ENCODE measurements at regions of chr9 and their contacts with region 1.

Region 1: GRCh38 chr9:34646211-34647083 is at the start of gene GALT:
- DNase-seq: peak; percentile 82 to 98 (median 93)
- ATAC-seq: peak; percentile 96
- H3K4me3 ChIP-seq: peak within 1 kb of the TSS; percentile 90
- H3K4me3 Mint-ChIP-seq: peak within 1 kb of the TSS; percentile 82 to 96 (median 92)
- H3K27ac ChIP-seq: peak within 1 kb of the TSS; percentile 87
- H3K27ac Mint-ChIP-seq: peak within 1 kb of the TSS; percentile 86 to 94 (median 90)
- H3K4me1 ChIP-seq: peaks cover 20 to 23% of the 10 kb centered on the region in 2 donors
- H3K4me1 Mint-ChIP-seq: peaks cover 18 to 48% (median 34%) of the 10 kb centered on the region in 7 donors
- H3K27me3 ChIP-seq: no peaks in the 10 kb centered on the region
- H3K27me3 Mint-ChIP-seq: no peaks in the 10 kb centered on the region
- total RNA-seq, gene GALT: 126 to 217 (median 162) TPM

Region 2: DNA sequence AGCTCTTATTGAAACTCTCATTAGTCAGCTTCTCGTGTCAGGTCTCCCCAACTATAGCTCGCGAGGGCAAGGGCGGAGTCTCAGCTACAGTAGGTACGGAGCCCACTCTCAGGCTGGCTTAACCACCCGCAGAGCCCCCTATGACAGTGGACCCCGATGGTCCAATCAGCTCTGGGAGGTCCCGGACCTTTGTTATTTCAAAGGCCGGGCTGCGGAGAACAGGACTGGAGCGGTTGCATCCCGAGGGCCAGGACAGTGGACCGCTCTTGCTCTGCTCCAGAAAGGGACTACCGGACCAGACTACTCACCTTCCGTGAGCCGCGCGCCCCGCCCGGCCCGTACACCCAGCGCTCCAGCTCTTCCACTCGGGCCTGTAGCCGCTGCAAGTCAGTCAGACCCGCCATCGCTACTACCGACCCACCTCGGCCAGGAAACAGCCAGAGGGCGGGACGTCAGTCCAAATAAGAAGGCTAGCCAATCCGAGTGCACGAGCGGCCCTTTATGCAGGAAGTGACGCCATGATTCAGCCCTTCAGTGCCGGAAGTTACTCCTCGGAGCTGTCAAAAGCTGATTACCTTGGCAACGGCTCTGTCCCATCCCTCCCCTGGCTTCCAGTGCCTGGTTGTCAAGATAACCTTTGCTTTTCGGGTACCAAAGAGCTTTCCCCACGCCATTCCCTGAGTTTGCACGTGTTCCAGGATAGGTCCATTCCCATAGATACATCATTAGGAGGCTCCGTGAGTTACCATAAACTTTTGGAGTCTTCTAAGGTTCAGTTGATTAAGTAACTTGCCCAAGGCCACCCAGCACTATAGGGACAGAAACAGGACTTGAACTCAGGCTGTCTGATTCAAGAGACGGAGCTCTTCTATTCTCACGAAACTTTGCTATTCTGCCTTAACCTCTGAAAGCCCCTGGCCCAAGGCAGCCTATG is 26.1 kb before region 1 on chr9 and contains the start of gene DCTN3:
- CTCF ChIA-PET with region 1: interaction called, 8 read pairs
- POLR2A ChIA-PET with region 1: interaction called, 10 read pairs
- intact Hi-C with region 1: loop called in 1 of 2 experiments (anchors 1 kb)
- DNase-seq: peak; percentile 61 to 94 (median 91)
- ATAC-seq: peak; percentile 98
- H3K4me3 ChIP-seq: peak within 1 kb of the TSS; percentile 86
- H3K4me3 Mint-ChIP-seq: peak within 1 kb of the TSS; percentile 88 to 98 (median 94)
- H3K27ac ChIP-seq: peak within 1 kb of the TSS; percentile 74
- H3K27ac Mint-ChIP-seq: peak within 1 kb of the TSS; percentile 65 to 97 (median 88)
- H3K4me1 ChIP-seq: peaks cover 12 to 30% of the 10 kb centered on the region in 2 donors
- H3K4me1 Mint-ChIP-seq: peaks cover 23 to 39% (median 32%) of the 10 kb centered on the region in 7 donors
- H3K27me3 ChIP-seq: peaks cover 3 to 31% of the 10 kb centered on the region in 2 donors
- H3K27me3 Mint-ChIP-seq: peaks cover 18 to 41% (median 27%) of the 10 kb centered on the region in 5 donors
- total RNA-seq, gene DCTN3: 55.6 to 110 (median 73.0) TPM

Region 3: DNA sequence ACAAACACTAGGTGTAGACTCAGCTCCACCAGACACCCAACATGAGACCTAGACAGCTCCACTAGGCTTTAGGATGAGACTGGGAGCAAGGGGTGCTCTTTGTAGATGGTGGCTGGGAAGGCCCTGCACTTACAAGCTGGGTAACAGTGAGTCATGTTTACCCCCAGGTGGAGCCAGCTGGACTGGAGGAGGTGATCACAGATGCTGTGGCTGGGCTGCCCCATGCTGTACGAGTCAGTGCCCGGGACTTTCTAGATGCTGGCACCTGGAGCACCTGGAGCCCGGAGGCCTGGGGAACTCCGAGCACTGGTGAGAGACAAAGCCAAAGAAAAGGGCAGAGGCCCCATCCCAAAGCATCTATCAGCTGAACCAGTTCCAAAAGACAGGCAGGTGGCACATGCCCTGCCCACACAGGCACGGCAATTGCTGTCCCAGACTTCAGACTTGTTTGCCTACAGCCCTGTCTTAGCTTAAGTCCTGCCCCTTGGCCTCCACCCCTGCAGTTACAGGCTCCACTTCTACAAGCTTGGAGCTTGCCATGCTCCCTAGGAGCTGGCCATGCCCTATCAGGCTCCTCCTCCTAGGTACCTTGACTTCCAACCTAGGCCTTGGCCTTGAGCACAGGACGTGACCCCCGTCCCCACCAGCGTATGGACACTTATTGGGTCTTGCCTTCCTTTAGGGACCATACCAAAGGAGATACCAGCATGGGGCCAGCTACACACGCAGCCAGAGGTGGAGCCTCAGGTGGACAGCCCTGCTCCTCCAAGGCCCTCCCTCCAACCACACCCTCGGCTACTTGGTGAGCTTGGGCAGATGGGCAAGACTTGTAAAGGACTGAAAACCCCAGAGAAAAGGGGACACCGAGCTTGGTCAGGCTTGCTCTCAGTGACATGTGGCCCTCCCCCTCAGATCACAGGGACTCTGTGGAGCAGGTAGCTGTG is 13.4 kb after region 1 on chr9:
- CTCF ChIA-PET with region 1: interaction called, 50 read pairs
- POLR2A ChIA-PET with region 1: interaction called, 79 read pairs
- intact Hi-C with region 1: loop called (anchors 1 kb)
- DNase-seq: no peak
- ATAC-seq: no peak
- H3K4me3 ChIP-seq: no peak overlapping the region
- H3K4me3 Mint-ChIP-seq: no peak overlapping the region
- H3K27ac ChIP-seq: no peak overlapping the region
- H3K27ac Mint-ChIP-seq: peak overlapping the region in 2 of 9 donors; percentile 21 to 32
- H3K4me1 ChIP-seq: peaks cover 28 to 32% of the 10 kb centered on the region in 2 donors
- H3K4me1 Mint-ChIP-seq: peaks cover 28 to 48% (median 40%) of the 10 kb centered on the region in 7 donors
- H3K27me3 ChIP-seq: no peaks in the 10 kb centered on the region
- H3K27me3 Mint-ChIP-seq: no peaks in the 10 kb centered on the region

Region 4: GRCh38 chr9:34701769-34702736 is 55.6 kb after region 1 on chr9:
- CTCF ChIA-PET with region 1: interaction called, 11 read pairs
- POLR2A ChIA-PET with region 1: interaction called, 4 read pairs
- intact Hi-C with region 1: loop called (anchors 1 kb)
- DNase-seq: peak; percentile 59 to 83 (median 73)
- ATAC-seq: peak; percentile 90
- H3K4me3 ChIP-seq: peak overlapping the region; percentile 61
- H3K4me3 Mint-ChIP-seq: peak overlapping the region; percentile 80 to 91 (median 84)
- H3K27ac ChIP-seq: no peak overlapping the region
- H3K27ac Mint-ChIP-seq: peak overlapping the region in 7 of 9 donors; percentile 1 to 84 (median 20)
- H3K4me1 ChIP-seq: no peaks in the 10 kb centered on the region
- H3K4me1 Mint-ChIP-seq: peaks cover 5 to 9% (median 6%) of the 10 kb centered on the region in 7 donors
- H3K27me3 ChIP-seq: no peaks in the 10 kb centered on the region
- H3K27me3 Mint-ChIP-seq: peaks cover 0 to 17% (median 0%) of the 10 kb centered on the region in 5 donors

Region 5: GRCh38 chr9:34793428-34793827 is 147.0 kb after region 1 on chr9:
- CTCF ChIA-PET with region 1: no interaction called
- POLR2A ChIA-PET with region 1: no interaction called
- intact Hi-C with region 1: no loop called
- DNase-seq: no peak
- ATAC-seq: no peak
- H3K4me3 ChIP-seq: no peak overlapping the region
- H3K4me3 Mint-ChIP-seq: no peak overlapping the region
- H3K27ac ChIP-seq: no peak overlapping the region
- H3K27ac Mint-ChIP-seq: no peak overlapping the region
- H3K4me1 ChIP-seq: no peaks in the 10 kb centered on the region
- H3K4me1 Mint-ChIP-seq: no peaks in the 10 kb centered on the region
- H3K27me3 ChIP-seq: no peaks in the 10 kb centered on the region
- H3K27me3 Mint-ChIP-seq: peaks cover 22 to 76% (median 67%) of the 10 kb centered on the region in 5 donors